ENCODE measurements at regions of chr3 and their contacts with region 1.

Region 1: DNA sequence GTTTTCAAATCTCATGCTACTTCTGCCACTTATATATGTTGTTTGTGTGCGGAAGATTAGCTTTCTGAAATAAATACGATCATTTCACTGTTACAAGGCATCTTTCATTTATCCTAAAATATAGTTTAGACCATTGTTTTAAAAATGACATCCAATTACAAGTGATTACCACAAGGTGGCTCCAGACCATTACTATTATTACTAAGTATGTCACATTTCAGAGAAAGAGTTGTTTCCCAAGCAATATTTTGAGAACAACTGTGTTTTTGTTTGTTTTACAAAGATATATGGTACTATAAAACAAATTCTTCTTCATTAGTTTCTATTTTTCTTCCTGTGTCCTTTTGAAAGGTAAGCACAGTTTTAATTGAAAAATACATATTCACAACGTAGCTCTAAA is 136.0 kb upstream of the RAP2B start:
- DNase-seq: no peak

Region 2: DNA sequence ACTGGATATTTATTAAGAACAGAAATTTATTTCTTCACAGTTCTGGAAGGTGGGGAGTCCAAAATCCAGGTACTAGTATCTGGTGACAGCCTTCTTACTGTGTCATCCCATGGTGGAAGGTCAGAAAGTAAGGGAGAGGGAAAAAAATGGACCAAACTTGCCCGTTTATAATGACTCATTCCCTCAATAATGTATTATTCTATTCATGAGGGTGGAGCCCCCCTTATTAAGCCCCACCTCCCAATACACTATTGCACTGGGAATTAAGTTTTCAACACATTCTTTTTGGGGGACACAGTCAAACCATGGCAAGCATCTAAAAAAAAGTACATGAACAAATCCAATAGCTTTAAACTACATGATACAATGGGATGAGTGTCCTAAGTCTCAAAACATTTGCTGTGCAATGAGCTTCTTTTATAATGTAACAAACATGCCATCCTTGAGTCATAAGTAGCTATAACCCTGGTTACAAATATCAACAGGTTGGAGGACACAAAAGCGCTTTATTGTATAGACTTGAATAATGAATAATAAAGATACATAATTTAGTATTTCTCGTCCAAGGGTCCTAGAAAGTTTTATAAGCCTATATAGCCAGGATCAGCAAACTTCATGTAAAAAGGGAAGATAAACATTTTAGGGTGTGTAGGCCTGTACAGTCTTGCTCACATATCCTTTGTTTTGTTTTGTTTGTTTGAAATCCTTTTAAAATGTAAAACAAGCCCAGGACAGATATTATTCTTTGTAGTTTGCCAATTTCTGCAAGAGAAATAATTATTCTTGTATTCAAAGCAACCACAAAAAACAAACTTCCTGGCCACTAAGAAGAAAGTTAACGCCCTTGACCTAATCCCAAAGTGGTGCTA is 24.6 kb before region 1 on chr3:
- intact Hi-C with region 1: no loop called
- DNase-seq: no peak

Region 3: GRCh38 chr3:153595186-153595815 is 569.3 kb after region 1 on chr3:
- intact Hi-C with region 1: loop called (anchors 5 kb)
- DNase-seq: no peak

Region 4: GRCh38 chr3:153768561-153769469 is 742.8 kb after region 1 on chr3:
- intact Hi-C with region 1: loop called (anchors 5 kb)
- DNase-seq: no peak

Region 5: GRCh38 chr3:154252759-154253638 is 1227.0 kb after region 1 on chr3:
- intact Hi-C with region 1: loop called (anchors 10 kb)
- DNase-seq: peak; percentile 92

Measured in cardiac septum (tissue), 1 donor.